AG04450 (cell line): ENCODE measurements at regions of chr5 and their contacts with region 1.

Region 1: DNA sequence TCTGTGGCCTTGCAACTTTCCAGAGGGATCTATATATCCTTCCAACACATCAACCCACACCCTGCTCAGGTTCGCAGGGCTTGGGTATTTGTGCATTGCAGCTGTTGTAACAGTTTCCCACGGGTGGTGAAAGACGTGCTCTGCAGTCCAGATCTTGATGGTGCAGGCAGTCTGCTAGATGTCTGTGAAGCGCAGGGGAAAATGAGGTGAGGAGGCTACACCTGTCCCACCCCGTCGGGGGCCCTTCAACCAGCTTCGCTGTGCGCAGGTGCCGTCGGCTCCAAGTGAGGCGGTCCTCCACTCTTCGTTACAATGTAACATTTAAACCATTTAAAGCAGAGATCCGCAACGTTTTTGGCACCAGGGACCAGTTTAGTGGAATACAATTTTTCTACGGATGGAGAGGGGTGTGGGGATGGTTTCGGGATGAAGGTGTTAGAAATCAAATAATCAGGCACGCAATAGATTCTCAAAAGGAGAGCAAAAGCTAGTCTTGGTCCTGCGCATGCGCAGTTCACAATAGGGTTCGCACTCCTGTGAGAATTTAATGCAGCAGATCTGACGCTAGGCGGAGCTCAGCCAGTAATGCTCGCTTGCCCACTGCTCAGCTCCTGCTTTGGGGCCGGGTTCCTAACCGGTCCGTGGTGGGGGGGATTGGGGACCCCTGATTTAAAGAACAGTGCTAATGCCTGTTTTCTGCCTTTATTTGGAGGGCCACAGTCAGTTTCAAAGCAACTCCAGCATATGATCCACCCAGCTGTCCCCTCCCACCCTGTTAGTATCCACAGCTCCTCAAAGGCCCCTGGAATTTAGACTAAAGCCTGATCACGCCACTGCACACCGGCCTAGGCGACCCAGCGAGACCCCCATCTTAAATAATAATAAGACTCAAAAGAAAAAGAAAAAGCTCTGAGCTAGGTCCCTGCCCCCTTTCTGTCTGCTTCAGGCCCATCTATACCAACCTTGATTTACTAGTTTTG is 97.1 kb upstream of the SELENOP start:
- DNase-seq: peak; percentile 68
- H3K4me3 ChIP-seq: peak overlapping the region; percentile 58
- H3K27ac ChIP-seq: no peak overlapping the region
- H3K27me3 ChIP-seq: peaks cover 23% of the 10 kb centered on the region
- CTCF ChIP-seq: peak; percentile 88

Region 2: GRCh38 chr5:42772265-42772993 is 136.4 kb before region 1 on chr5:
- CTCF ChIA-PET with region 1: no interaction called
- POLR2A ChIA-PET with region 1: no interaction called
- DNase-seq: no peak
- H3K4me3 ChIP-seq: no peak overlapping the region
- H3K27ac ChIP-seq: no peak overlapping the region
- H3K27me3 ChIP-seq: no peaks in the 10 kb centered on the region
- CTCF ChIP-seq: no peak

Region 3: GRCh38 chr5:42943931-42944631 is 35.3 kb after region 1 on chr5:
- CTCF ChIA-PET with region 1: interaction called, 13 read pairs
- POLR2A ChIA-PET with region 1: interaction called, 15 read pairs
- DNase-seq: no peak
- H3K4me3 ChIP-seq: peak overlapping the region; percentile 45
- H3K27ac ChIP-seq: peak overlapping the region; percentile 39
- H3K27me3 ChIP-seq: no peaks in the 10 kb centered on the region
- CTCF ChIP-seq: no peak

Region 4: DNA sequence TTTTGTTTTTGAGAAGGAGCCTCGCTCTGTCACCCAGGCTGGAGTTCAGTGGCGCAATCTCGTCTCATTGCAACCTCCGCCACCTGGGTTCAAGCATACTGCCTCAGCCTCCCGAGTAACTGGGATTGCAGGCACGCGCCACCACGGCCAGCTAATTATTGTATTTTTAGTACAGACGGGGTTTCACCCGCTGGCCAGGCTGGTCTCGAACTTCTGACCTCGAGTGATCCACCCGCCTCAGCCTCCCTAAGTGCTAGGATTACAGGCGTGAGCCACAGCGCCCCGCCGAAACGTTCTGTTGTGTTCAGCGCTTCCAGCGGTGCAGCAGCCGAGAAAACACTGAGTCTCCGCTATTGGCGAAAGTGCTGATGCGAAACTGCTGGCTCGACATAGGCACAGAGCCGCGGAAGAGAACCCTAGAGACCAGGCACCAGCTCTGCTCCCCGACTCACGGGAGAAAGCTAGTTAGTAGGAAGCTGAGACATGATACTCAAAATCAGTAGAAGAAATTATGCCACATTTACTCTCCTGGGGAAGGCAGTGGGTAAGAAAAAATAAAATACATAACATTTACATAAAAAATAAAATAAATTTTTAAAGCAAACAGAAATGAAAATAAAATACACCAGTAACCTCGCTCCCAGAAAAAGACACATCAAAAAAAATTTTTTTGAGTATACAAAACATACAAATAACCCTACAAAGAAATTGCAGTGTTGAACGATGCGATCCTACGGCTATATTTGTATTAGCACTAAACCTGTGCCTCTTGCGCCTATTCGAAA is 99.8 kb after region 1 on chr5:
- CTCF ChIA-PET with region 1: interaction called, 34 read pairs
- POLR2A ChIA-PET with region 1: interaction called, 6 read pairs
- DNase-seq: peak; percentile 79
- H3K4me3 ChIP-seq: peak overlapping the region; percentile 61
- H3K27ac ChIP-seq: peak overlapping the region; percentile 98
- H3K27me3 ChIP-seq: no peaks in the 10 kb centered on the region
- CTCF ChIP-seq: 0 out of 2 replicates have a peak, but pooled peaks have one; percentile 7

Region 5: DNA sequence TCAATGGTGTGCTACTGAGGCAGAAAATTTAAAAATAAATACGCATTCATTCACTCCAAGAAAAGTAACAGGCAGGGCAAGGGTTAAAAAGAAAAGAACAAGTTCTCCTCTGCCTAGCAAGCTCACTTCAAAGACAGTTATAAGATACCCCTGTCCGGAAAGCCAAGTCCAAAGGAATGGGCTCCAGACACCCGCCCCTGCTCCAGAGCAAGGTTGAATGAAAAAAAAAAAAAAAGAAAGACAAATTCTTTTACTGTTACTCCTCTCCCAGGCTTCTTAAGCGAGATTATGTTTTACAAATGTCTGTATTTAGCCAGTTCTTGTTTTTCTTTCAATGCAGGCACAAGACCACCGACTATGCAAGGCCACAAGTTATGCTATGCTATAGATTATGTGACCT is 140.4 kb after region 1 on chr5:
- CTCF ChIA-PET with region 1: interaction called, 11 read pairs
- POLR2A ChIA-PET with region 1: no interaction called
- DNase-seq: no peak
- H3K4me3 ChIP-seq: no peak overlapping the region
- H3K27ac ChIP-seq: no peak overlapping the region
- H3K27me3 ChIP-seq: no peaks in the 10 kb centered on the region
- CTCF ChIP-seq: no peak

Region 6: GRCh38 chr5:43120720-43121564 is 212.1 kb after region 1 on chr5 and contains the start of gene ZNF131:
- CTCF ChIA-PET with region 1: interaction called, 10 read pairs
- POLR2A ChIA-PET with region 1: no interaction called
- DNase-seq: peak; percentile 91
- H3K4me3 ChIP-seq: peak within 1 kb of the TSS; percentile 79
- H3K27ac ChIP-seq: peak within 1 kb of the TSS; percentile 91
- H3K27me3 ChIP-seq: no peaks in the 10 kb centered on the region
- CTCF ChIP-seq: no peak
- polyA plus RNA-seq, gene ZNF131: 30.4 and 42.5 TPM in 2 replicates